Tibial artery (tissue), 4 donors: ENCODE measurements at regions of chr2 and their contacts with region 1.

Region 1: DNA sequence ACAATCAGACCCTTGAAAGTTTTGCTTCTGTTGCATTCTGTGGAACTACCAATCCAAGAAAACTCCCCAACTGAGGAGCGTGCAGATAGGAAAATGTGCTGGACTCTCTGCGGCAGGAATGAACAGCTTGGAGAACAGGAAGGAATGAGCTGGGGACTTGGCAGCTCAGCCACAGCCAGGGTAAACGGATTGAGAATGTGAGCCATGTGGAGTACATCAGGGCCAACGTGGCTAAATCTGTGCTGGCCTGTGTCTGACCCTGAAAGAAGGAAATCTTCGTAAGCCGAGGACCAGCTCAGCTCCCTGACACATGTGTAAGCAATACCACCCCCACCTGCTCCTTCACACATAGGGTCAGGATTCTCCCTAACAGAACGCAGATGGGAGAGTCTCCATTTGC is 1023.7 kb downstream of the BCL11A start:
- DNase-seq: no peak
- H3K4me3 ChIP-seq: no peak overlapping the region
- H3K27ac ChIP-seq: no peak overlapping the region
- H3K4me1 ChIP-seq: no peaks in the 10 kb centered on the region
- H3K27me3 ChIP-seq: no peaks in the 10 kb centered on the region
- CTCF ChIP-seq: no peak

Region 2: DNA sequence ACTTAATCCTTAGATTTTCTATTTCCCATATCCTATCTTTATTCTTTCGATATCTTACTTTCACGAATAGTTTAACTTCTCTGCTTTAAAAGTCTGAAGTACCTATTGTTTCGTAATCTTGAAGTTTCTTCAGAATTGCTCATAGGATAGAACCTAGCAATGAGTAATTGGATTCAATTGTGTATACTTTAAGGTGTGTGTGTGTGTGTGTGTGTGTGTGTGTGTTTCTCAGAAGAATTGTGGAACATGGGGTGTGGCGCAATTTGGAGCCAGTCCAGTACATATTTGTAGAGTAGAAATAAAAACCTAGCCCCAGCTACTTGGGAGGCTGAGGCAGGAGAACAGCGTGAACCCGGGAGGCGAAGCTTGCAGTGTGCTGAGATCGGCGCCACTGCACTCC is 126.1 kb after region 1 on chr2:
- intact Hi-C with region 1: no loop called
- DNase-seq: no peak
- H3K4me3 ChIP-seq: no peak overlapping the region
- H3K27ac ChIP-seq: no peak overlapping the region
- H3K4me1 ChIP-seq: no peaks in the 10 kb centered on the region
- H3K27me3 ChIP-seq: no peaks in the 10 kb centered on the region
- CTCF ChIP-seq: no peak

Region 3: DNA sequence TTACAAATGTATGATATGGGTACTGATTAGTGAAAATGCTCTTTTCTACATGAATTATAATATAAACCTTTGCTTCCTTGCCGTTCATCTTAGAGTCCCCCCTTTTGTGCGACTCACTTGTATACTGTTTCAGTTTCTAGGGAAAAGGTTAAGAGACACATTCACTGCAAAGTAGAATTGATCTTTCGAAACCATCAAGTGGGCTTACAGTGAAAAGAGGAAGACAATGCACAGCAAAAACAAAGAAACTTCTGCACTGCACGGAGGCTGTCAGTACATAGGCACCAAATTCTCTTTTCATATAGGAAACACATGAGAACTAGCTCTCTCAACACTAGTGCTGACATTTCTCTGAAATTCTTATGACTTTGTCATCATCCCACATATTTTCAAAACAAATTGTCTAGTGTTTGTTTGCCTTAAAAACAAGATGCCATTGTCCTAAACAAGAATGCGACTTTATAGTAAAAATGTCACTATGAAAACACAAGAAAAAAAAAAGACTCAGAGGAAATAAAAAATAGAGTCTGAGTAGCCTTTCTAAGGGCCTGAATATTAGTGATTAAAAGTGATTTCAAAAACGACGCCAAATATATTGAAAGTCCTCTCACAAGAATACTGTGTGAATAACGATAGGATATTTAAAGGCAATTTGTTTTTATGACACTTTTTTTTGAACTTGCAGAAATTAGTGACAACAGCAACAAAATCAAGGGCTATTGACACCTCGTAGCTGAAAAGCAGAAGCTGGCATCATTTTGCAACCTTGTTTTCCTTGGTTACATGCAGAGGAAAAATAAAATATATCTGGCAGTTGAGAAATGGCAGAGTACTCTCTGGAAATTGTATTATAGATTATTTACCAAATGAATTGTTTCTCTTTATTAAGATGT is 196.7 kb after region 1 on chr2:
- intact Hi-C with region 1: no loop called
- DNase-seq: no peak
- H3K4me3 ChIP-seq: no peak overlapping the region
- H3K27ac ChIP-seq: no peak overlapping the region
- H3K4me1 ChIP-seq: no peaks in the 10 kb centered on the region
- H3K27me3 ChIP-seq: no peaks in the 10 kb centered on the region
- CTCF ChIP-seq: no peak

Region 4: DNA sequence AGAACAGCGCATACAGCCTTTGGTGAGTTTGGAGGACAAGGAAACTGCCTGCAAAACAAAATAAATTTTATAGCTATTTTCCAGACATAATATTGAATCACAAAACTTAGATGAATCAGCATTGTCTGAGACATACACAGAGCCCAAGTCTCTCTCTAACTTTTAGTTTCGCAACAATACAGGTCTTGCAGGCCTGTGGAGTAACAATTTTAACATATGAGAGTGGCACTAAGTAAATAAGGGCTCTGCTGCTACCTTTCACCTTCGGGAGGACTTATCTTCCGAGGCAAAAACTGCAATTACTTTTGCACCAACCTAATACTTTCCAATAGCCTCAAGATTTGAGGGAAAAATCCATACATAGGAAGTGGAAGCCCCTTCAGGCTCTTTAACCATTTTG is 1431.8 kb after region 1 on chr2:
- intact Hi-C with region 1: loop called (anchors 10 kb)
- DNase-seq: no peak
- H3K4me3 ChIP-seq: no peak overlapping the region
- H3K27ac ChIP-seq: no peak overlapping the region
- H3K4me1 ChIP-seq: no peaks in the 10 kb centered on the region
- H3K27me3 ChIP-seq: no peaks in the 10 kb centered on the region
- CTCF ChIP-seq: no peak